GM10248 (cell line): ENCODE measurements at regions of chr1 and their contacts with region 1.

Region 1: GRCh38 chr1:201436393-201436792 is 14.9 kb upstream of the TNNI1 start:
- DNase-seq: no peak
- CTCF ChIP-seq: no peak

Region 2: GRCh38 chr1:201408176-201408833 is 28.1 kb before region 1 on chr1:
- CTCF ChIA-PET with region 1: interaction called, 20 read pairs
- POLR2A ChIA-PET with region 1: no interaction called
- DNase-seq: peak; percentile 85
- CTCF ChIP-seq: peak; percentile 95

Region 3: DNA sequence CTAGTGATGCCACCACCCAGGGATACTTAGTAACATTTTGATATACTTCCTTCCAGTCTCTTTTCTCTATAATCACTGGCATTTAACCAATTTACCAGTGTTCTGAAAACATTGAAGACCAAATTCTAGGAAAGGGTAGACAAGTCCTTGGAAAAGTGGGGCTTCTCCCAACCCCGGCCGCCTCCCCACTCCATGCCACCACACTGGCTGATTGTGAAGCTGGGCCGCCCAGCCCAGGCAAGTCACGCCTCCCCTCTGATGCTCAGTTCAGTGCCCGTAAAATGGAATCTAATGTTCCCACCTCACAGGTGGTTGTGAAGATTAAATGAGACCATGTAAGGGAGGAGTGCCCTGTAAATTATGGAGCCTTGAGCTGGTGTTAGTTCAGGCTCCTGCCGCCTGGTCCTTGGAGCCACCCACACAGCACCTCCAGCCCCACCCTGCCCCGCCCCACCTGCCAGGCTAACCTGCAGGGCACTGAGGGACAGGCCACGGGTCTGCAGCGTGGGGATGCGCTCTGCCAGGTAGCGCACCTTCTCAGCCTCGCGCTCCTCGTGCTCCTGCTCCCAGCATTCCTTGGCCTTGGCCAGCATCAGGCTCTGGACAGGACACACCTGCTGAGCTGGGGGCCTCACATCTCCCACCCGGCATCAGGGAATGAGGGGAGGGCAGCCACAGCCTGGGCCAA is 22.2 kb before region 1 on chr1:
- CTCF ChIA-PET with region 1: interaction called, 20 read pairs
- POLR2A ChIA-PET with region 1: no interaction called
- DNase-seq: no peak
- CTCF ChIP-seq: no peak

Region 4: DNA sequence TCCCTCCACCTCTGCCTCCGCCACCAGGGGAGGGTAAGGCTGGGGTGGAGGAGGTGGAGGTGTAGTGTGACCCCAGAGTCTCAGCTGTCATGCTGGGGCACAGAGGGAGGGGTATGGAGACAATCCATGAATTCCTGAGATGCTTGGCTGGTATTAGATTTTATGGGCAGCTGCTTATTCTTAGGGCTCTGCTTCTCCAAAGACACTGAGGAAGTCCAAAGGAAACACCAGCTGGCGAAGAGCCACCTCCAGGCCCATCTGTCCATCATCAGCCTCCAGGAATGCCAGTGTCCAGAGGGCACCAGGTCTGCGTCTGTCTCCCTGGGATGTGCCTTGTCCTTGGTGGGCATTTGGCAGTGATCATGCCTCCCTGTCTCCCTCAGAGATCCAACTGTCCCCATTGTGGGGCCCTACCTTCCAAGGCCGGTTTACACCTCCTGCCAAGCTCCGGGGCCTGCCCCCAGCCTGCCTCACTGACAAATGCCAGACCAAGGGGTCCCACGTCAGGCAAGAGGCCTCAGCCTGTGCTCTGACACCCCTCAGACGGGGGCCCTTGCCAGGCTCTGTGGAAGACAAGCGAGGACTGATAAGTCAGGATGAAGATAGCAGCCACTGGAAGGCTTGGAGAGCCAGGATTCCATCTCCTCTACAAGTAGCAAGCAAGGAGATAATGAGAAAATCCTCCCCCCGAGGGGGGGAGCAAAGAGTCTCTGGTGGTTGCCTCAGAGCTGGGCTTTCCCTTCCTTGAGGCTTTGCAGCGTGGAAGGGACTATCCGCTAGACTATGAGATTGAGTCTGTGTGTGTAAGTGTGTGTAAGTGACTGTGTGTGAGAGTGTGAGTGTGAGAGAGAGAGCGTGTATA is 16.4 kb before region 1 on chr1:
- CTCF ChIA-PET with region 1: interaction called, 22 read pairs
- POLR2A ChIA-PET with region 1: no interaction called
- DNase-seq: no peak
- CTCF ChIP-seq: no peak

Region 5: GRCh38 chr1:201447911-201448871 is 11.8 kb after region 1 on chr1:
- CTCF ChIA-PET with region 1: interaction called, 92 read pairs
- POLR2A ChIA-PET with region 1: interaction called, 6 read pairs
- DNase-seq: peak; percentile 89
- CTCF ChIP-seq: peak; percentile 80

Region 6: DNA sequence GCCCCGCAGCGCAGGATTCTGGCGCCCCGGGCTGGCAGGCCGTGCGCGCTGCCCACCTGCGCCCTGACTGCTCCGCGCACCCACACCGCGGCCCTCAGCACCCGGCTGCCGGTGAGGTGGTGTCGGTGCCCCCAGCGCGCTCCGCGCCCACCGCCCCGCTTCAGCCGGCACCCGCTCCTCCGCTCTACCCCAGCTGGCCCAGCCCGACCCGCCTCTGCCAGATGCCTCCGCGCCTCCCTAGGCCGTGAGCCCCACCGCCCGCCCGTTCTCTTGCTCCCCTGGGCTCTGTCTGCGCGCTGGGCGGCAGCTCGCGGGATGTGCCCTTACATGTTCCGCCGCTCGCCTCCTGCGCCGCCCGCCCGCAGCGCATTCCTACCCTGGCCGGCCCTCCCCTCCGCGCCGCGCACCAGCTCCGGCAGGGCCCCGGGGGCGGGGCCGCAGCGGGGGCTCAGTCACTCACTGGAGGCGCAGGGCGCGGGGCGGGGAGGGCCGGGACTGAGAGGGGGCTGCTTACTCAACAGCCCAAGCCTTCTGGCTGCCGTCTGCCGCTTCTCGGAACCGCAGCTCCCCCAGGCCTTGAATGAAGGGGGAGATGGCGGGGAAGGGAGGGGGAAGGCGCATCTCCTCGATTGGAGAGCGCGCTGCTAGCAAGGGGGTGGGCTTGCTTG is 32.6 kb after region 1 on chr1 and contains the start of gene PHLDA3:
- CTCF ChIA-PET with region 1: interaction called, 12 read pairs
- POLR2A ChIA-PET with region 1: no interaction called
- DNase-seq: peak; percentile 81
- CTCF ChIP-seq: no peak

Region 7: GRCh38 chr1:201488817-201489589 is 52.6 kb after region 1 on chr1:
- CTCF ChIA-PET with region 1: interaction called, 234 read pairs
- POLR2A ChIA-PET with region 1: no interaction called
- DNase-seq: no peak
- CTCF ChIP-seq: no peak

Region 8: GRCh38 chr1:201766131-201766866 is 329.9 kb after region 1 on chr1:
- CTCF ChIA-PET with region 1: no interaction called
- POLR2A ChIA-PET with region 1: no interaction called
- DNase-seq: no peak
- CTCF ChIP-seq: no peak